ENCODE measurements at regions of chr4 and their contacts with region 1.

Region 1: DNA sequence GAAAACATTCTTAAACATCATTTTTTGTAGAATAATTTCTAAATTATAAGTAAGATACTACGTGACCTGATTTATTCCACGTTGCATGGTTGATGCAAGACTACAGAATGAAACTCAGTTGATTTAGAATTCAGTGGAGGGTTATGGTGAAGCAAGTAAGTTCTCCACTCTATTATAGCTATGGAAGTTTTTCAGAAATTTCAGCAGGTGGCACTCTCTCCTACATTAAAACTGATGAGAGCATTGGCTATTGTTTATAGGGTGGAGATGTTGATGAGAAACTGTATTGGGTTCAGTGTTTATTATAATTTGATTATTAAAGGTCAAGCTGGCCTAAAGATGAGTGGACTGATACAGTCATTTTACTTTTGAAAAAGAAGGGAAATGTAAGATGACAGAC is 88.0 kb downstream of the FNIP2 start:
- DNase-seq: peak in 2 of 4 experiments; percentile 28 to 32
- ATAC-seq: peak; percentile 96
- H3K4me3 ChIP-seq: no peak overlapping the region
- H3K27ac ChIP-seq: no peak overlapping the region
- H3K4me1 ChIP-seq: no peaks in the 10 kb centered on the region
- H3K27me3 ChIP-seq: no peaks in the 10 kb centered on the region
- CTCF ChIP-seq: peak; percentile 55 to 80 (median 61); a peak in 5 of 6 replicates
- EP300 ChIP-seq: no peak
- POLR2A ChIP-seq: no peak
- RAD21 ChIP-seq: peak; percentile 90 to 92

Region 2: GRCh38 chr4:157907226-157907946 is 949.5 kb before region 1 on chr4:
- CTCF ChIA-PET with region 1: no interaction called
- POLR2A ChIA-PET with region 1: no interaction called
- in situ Hi-C with region 1: no loop called
- intact Hi-C with region 1: no loop called
- DNase-seq: no peak
- ATAC-seq: no peak
- H3K4me3 ChIP-seq: no peak overlapping the region
- H3K27ac ChIP-seq: no peak overlapping the region
- H3K4me1 ChIP-seq: no peaks in the 10 kb centered on the region
- H3K27me3 ChIP-seq: no peaks in the 10 kb centered on the region
- CTCF ChIP-seq: no peak
- EP300 ChIP-seq: no peak
- POLR2A ChIP-seq: no peak
- RAD21 ChIP-seq: no peak

Region 3: DNA sequence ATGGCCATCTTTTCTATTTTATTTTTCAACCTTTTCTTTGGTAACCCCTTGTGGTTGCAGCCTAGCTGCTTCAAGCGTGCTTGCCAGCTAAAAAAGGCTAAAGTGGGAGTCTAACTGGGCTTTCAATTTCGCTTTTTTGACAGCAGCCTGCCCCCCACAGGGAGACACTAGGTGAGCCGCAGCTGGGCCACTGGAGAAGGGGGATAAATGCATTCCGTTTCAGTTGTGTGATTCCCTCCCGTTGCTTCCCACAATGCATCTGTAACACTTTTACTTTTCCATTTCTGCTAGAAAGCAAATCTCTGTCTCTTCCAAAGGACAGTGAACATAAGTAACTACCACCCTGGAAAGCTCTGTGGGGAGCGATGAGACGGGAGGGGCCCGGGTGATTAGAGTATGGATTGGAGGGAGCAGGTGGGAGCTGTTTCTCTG is 159.8 kb after region 1 on chr4:
- CTCF ChIA-PET with region 1: interaction called, 6 read pairs
- POLR2A ChIA-PET with region 1: no interaction called
- in situ Hi-C with region 1: no loop called
- intact Hi-C with region 1: loop called (anchors 1 kb)
- DNase-seq: peak; percentile 46 to 70 (median 58)
- ATAC-seq: peak; percentile 86
- H3K4me3 ChIP-seq: no peak overlapping the region
- H3K27ac ChIP-seq: no peak overlapping the region
- H3K4me1 ChIP-seq: peaks cover 3 to 13% of the 10 kb centered on the region in 2 experiments; a peak in 3 of 5 replicates
- H3K27me3 ChIP-seq: no peaks in the 10 kb centered on the region
- CTCF ChIP-seq: peak; percentile 52 to 63 (median 59)
- EP300 ChIP-seq: no peak
- POLR2A ChIP-seq: no peak
- RAD21 ChIP-seq: peak; percentile 30 to 69; a peak in 3 of 4 replicates

Region 4: DNA sequence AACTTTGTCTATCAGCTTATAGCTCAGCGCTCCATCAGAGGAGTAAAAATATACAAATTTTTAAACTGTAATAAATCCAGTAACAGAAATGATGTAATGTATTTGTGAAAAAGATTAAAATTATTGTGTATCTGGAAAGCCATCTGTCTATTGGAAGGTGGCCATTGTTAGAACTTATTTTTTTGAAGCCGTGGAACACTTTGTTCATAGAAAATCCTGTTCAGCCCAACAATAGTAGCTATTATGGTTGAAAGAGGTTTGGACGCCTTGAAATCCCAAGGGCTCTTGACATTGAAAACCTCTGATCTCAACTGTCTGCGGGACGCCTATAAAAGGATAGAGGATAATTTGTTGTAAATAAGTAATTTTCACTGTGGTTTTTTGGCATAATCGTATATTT is 344.3 kb after region 1 on chr4:
- CTCF ChIA-PET with region 1: interaction called, 18 read pairs
- POLR2A ChIA-PET with region 1: interaction called, 3 read pairs
- in situ Hi-C with region 1: loop called (anchors 5 kb)
- intact Hi-C with region 1: loop called (anchors 1 kb)
- DNase-seq: no peak
- ATAC-seq: no peak
- H3K4me3 ChIP-seq: no peak overlapping the region
- H3K27ac ChIP-seq: no peak overlapping the region
- H3K4me1 ChIP-seq: peaks cover 0 to 4% of the 10 kb centered on the region in 2 experiments; a peak in 2 of 5 replicates
- H3K27me3 ChIP-seq: no peaks in the 10 kb centered on the region
- CTCF ChIP-seq: no peak
- EP300 ChIP-seq: no peak
- POLR2A ChIP-seq: no peak
- RAD21 ChIP-seq: no peak

Region 5: GRCh38 chr4:159206427-159206871 is 349.6 kb after region 1 on chr4:
- CTCF ChIA-PET with region 1: interaction called, 18 read pairs
- POLR2A ChIA-PET with region 1: interaction called, 3 read pairs
- in situ Hi-C with region 1: loop called (anchors 5 kb)
- intact Hi-C with region 1: loop called (anchors 1 kb)
- DNase-seq: no peak
- ATAC-seq: no peak
- H3K4me3 ChIP-seq: no peak overlapping the region
- H3K27ac ChIP-seq: no peak overlapping the region
- H3K4me1 ChIP-seq: no peaks in the 10 kb centered on the region; a peak in 1 of 5 replicates
- H3K27me3 ChIP-seq: no peaks in the 10 kb centered on the region
- CTCF ChIP-seq: no peak
- EP300 ChIP-seq: no peak
- POLR2A ChIP-seq: no peak
- RAD21 ChIP-seq: no peak

Region 6: DNA sequence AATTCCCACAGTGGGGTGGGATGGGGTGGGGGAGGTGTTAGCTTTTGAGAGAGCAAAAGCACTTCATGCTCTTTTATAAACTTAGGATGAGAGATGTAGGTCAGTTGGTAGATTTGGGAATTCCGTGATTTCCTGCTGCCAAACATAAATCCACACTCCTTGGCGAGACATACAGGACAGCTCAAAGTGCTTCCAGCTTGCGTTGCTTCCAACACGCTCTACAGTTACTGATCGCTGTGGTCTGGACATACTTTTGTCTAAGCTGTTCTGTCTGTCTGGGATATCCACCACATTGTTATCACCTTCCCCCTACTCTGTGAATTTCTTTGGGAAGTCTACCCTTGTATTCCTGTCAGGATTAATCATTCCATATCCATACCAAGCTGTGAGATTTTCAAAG is 363.5 kb after region 1 on chr4:
- CTCF ChIA-PET with region 1: no interaction called
- POLR2A ChIA-PET with region 1: no interaction called
- in situ Hi-C with region 1: no loop called
- intact Hi-C with region 1: no loop called
- DNase-seq: no peak
- ATAC-seq: no peak
- H3K4me3 ChIP-seq: no peak overlapping the region
- H3K27ac ChIP-seq: no peak overlapping the region
- H3K4me1 ChIP-seq: no peaks in the 10 kb centered on the region
- H3K27me3 ChIP-seq: no peaks in the 10 kb centered on the region
- CTCF ChIP-seq: no peak
- EP300 ChIP-seq: no peak
- POLR2A ChIP-seq: no peak
- RAD21 ChIP-seq: no peak